ENCODE measurements at regions of chr7 and their contacts with region 1.

Region 1: DNA sequence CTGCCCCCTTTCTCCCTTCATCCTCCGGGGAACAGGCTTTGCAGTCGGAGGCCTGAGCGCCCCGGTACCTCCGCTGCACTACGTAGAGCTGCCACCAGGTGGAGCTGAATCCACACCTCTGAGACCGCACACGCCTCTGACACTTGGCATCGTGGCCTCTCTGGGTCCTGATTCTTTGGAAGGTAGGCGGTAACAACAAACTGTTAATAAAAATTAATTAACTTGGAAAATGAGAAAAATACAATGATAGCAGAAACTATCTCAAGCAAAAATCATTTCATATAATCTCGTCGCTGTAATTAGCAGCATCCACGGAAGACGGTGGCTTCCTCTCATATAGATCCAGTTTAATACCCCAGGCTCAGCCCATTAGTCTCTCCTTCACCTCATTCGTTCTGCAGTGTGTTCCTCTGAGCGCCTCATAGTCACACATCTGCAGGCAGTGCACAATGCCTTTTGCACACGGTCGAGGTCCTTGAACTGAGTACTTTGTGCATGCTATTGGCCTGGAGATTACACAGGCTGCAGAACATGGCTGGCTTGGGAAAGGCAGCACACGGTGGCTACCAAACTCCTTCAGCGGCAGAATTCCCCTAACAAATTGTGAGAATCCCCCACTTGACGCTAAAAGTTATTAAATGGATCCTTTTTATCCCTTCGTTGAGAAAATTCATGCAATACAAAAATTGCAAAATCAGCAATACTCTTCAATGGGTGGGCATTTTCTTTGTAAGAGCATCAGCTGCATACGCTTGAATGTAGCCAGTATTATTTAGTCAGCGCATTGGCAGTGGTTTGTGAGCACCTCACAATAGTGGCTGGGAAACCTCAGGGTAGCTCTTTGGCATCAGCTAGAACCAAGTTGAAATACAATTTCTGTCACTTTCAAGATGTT is 18.7 kb downstream of the OR9A2 start:
- DNase-seq: peak; percentile 74
- H3K4me3 Mint-ChIP-seq: no peak overlapping the region
- H3K27ac Mint-ChIP-seq: no peak overlapping the region
- H3K4me1 Mint-ChIP-seq: no peaks in the 10 kb centered on the region
- H3K27me3 Mint-ChIP-seq: peaks cover 54% of the 10 kb centered on the region
- CTCF ChIP-seq: peak; percentile 95

Region 2: GRCh38 chr7:142811154-142811737 is 197.0 kb before region 1 on chr7:
- CTCF ChIA-PET with region 1: interaction called, 10 read pairs
- POLR2A ChIA-PET with region 1: no interaction called
- intact Hi-C with region 1: no loop called
- DNase-seq: peak; percentile 58
- H3K4me3 Mint-ChIP-seq: no peak overlapping the region
- H3K27ac Mint-ChIP-seq: no peak overlapping the region
- H3K4me1 Mint-ChIP-seq: no peaks in the 10 kb centered on the region
- H3K27me3 Mint-ChIP-seq: peaks cover 79% of the 10 kb centered on the region
- CTCF ChIP-seq: peak; percentile 63

Region 3: DNA sequence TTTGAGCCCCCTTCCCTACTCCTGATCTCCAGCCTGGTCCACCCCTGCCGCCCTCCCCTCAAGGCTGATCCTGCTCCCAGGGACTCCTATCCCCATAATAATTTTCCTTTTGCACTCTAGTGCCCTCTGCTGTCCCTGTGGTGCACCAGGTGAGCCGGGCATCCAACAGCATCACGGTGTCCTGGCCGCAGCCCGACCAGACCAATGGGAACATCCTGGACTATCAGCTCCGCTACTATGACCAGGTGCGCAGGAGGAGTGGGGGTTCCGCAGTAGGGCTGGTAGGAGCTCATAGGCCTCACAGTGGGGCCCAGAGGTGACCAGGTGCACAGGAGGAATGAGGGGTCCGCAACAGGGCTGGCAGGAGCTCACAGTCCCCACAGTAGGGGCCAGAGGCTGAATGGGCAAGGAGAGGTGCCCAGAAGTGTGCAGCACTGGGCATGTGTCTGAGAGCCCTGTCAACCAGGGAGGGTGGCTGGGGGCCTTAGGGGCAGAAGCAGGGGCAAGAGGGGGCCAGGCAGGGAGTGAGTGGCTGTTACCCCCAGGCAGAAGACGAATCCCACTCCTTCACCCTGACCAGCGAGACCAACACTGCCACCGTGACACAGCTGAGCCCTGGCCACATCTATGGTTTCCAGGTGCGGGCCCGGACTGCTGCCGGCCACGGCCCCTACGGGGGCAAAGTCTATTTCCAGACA is 141.7 kb before region 1 on chr7:
- CTCF ChIA-PET with region 1: interaction called, 48 read pairs
- POLR2A ChIA-PET with region 1: no interaction called
- intact Hi-C with region 1: no loop called
- DNase-seq: peak; percentile 73
- H3K4me3 Mint-ChIP-seq: no peak overlapping the region
- H3K27ac Mint-ChIP-seq: no peak overlapping the region
- H3K4me1 Mint-ChIP-seq: peaks cover 5% of the 10 kb centered on the region
- H3K27me3 Mint-ChIP-seq: peaks cover 22% of the 10 kb centered on the region
- CTCF ChIP-seq: peak; percentile 61

Region 4: GRCh38 chr7:142898377-142899170 is 109.7 kb before region 1 on chr7:
- CTCF ChIA-PET with region 1: interaction called, 25 read pairs
- POLR2A ChIA-PET with region 1: no interaction called
- intact Hi-C with region 1: no loop called
- DNase-seq: peak; percentile 62
- H3K4me3 Mint-ChIP-seq: no peak overlapping the region
- H3K27ac Mint-ChIP-seq: no peak overlapping the region
- H3K4me1 Mint-ChIP-seq: no peaks in the 10 kb centered on the region
- H3K27me3 Mint-ChIP-seq: peaks cover 76% of the 10 kb centered on the region
- CTCF ChIP-seq: no peak

Region 5: GRCh38 chr7:142960955-142961512 is 47.2 kb before region 1 on chr7:
- CTCF ChIA-PET with region 1: interaction called, 17 read pairs
- POLR2A ChIA-PET with region 1: no interaction called
- intact Hi-C with region 1: no loop called
- DNase-seq: peak; percentile 37
- H3K4me3 Mint-ChIP-seq: no peak overlapping the region
- H3K27ac Mint-ChIP-seq: no peak overlapping the region
- H3K4me1 Mint-ChIP-seq: no peaks in the 10 kb centered on the region
- H3K27me3 Mint-ChIP-seq: peaks cover 55% of the 10 kb centered on the region
- CTCF ChIP-seq: no peak

Region 6: GRCh38 chr7:143214789-143215679 is 206.8 kb after region 1 on chr7:
- CTCF ChIA-PET with region 1: interaction called, 531 read pairs
- POLR2A ChIA-PET with region 1: interaction called, 9 read pairs
- intact Hi-C with region 1: loop called (anchors 1 kb)
- DNase-seq: peak; percentile 89
- H3K4me3 Mint-ChIP-seq: no peak overlapping the region
- H3K27ac Mint-ChIP-seq: no peak overlapping the region
- H3K4me1 Mint-ChIP-seq: no peaks in the 10 kb centered on the region
- H3K27me3 Mint-ChIP-seq: peaks cover 25% of the 10 kb centered on the region
- CTCF ChIP-seq: peak; percentile 99

Region 7: DNA sequence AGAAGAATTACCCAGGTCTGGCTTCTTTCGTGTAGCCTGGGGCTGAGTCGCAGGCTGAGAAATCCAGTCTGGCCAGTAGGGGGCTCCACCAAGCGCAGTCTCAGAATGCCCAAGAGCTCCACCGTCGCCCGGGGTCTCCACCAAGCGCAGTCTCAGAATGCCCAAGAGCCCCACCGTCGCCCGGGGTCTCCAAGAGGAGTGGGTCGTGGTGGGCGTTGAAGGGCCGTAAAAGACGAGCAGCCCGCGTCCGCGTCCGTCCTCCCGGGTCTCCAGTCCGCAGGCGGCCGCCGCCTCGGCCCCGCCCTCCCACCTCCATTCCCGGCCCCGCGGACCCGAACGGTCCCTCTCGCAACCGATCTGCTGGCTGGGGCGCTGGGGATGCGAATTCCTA is 372.0 kb after region 1 on chr7:
- CTCF ChIA-PET with region 1: no interaction called
- POLR2A ChIA-PET with region 1: no interaction called
- intact Hi-C with region 1: no loop called
- DNase-seq: peak; percentile 80
- H3K4me3 Mint-ChIP-seq: peak overlapping the region; percentile 77
- H3K27ac Mint-ChIP-seq: peak overlapping the region; percentile 88
- H3K4me1 Mint-ChIP-seq: peaks cover 32% of the 10 kb centered on the region
- H3K27me3 Mint-ChIP-seq: no peaks in the 10 kb centered on the region
- CTCF ChIP-seq: peak; percentile 71

Measured in MCF 10A (cell line).